CD4-positive, alpha-beta memory T cell (primary cell): ENCODE measurements at regions of chr7 and their contacts with region 1.

Region 1: DNA sequence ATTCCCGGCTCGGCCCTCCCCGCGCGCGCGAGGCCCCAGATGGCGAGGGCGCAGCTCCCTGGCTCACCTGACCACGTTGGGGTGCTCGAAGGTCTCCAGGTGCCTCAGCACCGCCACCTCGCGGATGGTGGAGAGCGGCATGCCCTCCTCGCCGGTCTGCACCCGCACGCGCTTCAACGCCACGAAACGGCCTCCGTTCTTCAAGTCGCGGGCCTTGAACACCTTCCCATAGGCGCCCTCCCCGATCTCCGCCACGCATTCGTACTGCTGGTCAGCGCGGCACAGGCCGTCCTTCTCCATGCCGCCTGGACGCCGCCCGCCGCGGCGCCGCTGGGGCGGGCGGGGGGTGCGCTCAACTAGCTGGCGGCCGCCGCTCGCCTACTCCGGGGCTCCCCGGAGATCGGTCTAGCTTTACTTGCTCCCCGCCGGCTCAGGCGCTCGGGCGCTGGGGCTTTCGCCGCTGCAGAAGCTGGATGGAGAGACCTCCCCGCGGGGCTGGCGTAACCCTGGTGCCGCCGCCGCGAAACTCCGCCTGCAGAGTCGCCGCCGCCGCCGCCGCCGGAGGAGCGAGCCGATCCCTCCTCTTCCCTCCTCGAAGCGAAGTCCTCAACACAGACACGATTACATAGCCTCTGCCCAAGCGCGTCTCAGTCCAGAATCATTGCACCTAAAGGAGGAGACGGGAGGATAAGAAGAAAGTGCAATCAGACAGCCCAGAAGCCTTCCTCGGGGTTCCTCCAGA is 3.2 kb downstream of the CDK6 start:
- DNase-seq: peak; percentile 83 to 89 (median 86)
- H3K4me3 ChIP-seq: peak overlapping the region; percentile 73 to 89
- H3K4me3 Mint-ChIP-seq: peak overlapping the region; percentile 87 to 98 (median 94)
- H3K27ac ChIP-seq: peak overlapping the region; percentile 68
- H3K27ac Mint-ChIP-seq: peak overlapping the region; percentile 93 to 96 (median 94)
- H3K4me1 ChIP-seq: peaks cover 36% of the 10 kb centered on the region
- H3K4me1 Mint-ChIP-seq: peaks cover 30 to 66% (median 43%) of the 10 kb centered on the region in 4 donors
- H3K27me3 ChIP-seq: no peaks in the 10 kb centered on the region
- H3K27me3 Mint-ChIP-seq: no peaks in the 10 kb centered on the region

Region 2: GRCh38 chr7:92245487-92246362 is 587.5 kb before region 1 on chr7 and contains the starts of genes ANKIB1 and KRIT1:
- CTCF ChIA-PET with region 1: no interaction called
- POLR2A ChIA-PET with region 1: no interaction called
- intact Hi-C with region 1: loop called (anchors 10 kb)
- DNase-seq: peak; percentile 86 to 91 (median 88)
- H3K4me3 ChIP-seq: peak within 1 kb of the TSS; percentile 91 to 98
- H3K4me3 Mint-ChIP-seq: peak within 1 kb of the TSS; percentile 94 to 100 (median 99)
- H3K27ac ChIP-seq: peak within 1 kb of the TSS; percentile 97
- H3K27ac Mint-ChIP-seq: peak within 1 kb of the TSS; percentile 98 to 100 (median 100)
- H3K4me1 ChIP-seq: peaks cover 43% of the 10 kb centered on the region
- H3K4me1 Mint-ChIP-seq: peaks cover 26 to 49% (median 37%) of the 10 kb centered on the region in 4 donors
- H3K27me3 ChIP-seq: no peaks in the 10 kb centered on the region
- H3K27me3 Mint-ChIP-seq: no peaks in the 10 kb centered on the region
- total RNA-seq, gene ANKIB1: 77.7 to 78.5 TPM
- total RNA-seq, gene KRIT1: 66.0 to 80.7 TPM

Region 3: DNA sequence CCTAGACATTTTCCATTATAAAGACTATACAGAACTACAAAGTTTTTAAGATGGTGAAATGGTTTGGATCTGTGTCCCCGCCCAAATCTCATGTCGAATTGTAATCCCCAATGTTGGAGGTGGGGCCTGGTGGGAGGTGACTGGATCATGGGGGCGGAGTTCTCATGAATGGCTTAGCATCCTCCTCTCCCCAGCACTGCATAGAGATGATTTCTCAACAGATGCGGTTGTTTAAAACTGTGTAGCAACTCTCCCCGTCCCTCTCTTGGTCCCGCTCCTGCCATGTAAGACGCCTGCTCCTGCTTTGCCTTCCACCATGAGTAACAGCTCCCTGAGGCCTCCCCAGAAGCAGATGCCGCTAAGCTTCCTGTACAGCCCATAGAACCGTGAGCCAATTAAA is 244.6 kb before region 1 on chr7:
- CTCF ChIA-PET with region 1: interaction called, 3 read pairs
- POLR2A ChIA-PET with region 1: interaction called, 5 read pairs
- intact Hi-C with region 1: loop called (anchors 1 kb)
- DNase-seq: peak in 1 of 5 donors; percentile 4
- H3K4me3 ChIP-seq: peak overlapping the region; percentile 82 to 98
- H3K4me3 Mint-ChIP-seq: peak overlapping the region; percentile 87 to 98 (median 96)
- H3K27ac ChIP-seq: peak overlapping the region; percentile 91
- H3K27ac Mint-ChIP-seq: peak overlapping the region; percentile 19 to 97 (median 80)
- H3K4me1 ChIP-seq: peaks cover 58% of the 10 kb centered on the region
- H3K4me1 Mint-ChIP-seq: peaks cover 41 to 72% (median 52%) of the 10 kb centered on the region in 4 donors
- H3K27me3 ChIP-seq: no peaks in the 10 kb centered on the region
- H3K27me3 Mint-ChIP-seq: no peaks in the 10 kb centered on the region

Region 4: DNA sequence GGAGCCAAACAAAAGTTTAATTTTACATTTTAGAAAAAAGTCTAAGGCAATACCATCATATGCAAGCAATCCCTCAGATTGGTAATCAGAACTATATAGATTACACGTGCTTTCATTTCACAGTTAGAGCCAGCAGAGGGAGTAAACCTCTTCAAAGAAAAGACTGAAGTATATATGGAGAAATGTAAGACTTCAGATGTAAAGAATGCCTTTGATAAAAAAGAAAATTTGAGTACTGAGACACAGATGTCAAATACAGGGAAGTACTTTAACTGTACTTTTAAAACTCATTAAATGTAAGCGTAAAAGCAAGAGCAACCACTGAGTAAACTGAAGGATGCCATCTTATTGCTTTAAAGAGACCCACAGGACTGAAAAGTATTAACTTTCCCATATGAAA is 141.6 kb before region 1 on chr7:
- CTCF ChIA-PET with region 1: interaction called, 26 read pairs
- POLR2A ChIA-PET with region 1: interaction called, 10 read pairs
- intact Hi-C with region 1: loop called (anchors 1 kb)
- DNase-seq: peak; percentile 38 to 58 (median 43)
- H3K4me3 ChIP-seq: no peak overlapping the region
- H3K4me3 Mint-ChIP-seq: peak overlapping the region in 2 of 8 donors; percentile 4 to 6
- H3K27ac ChIP-seq: no peak overlapping the region
- H3K27ac Mint-ChIP-seq: peak overlapping the region; percentile 18 to 84 (median 55)
- H3K4me1 ChIP-seq: peaks cover 32% of the 10 kb centered on the region
- H3K4me1 Mint-ChIP-seq: peaks cover 20 to 42% (median 33%) of the 10 kb centered on the region in 4 donors
- H3K27me3 ChIP-seq: no peaks in the 10 kb centered on the region
- H3K27me3 Mint-ChIP-seq: no peaks in the 10 kb centered on the region

Region 5: GRCh38 chr7:92809397-92810241 is 23.6 kb before region 1 on chr7:
- CTCF ChIA-PET with region 1: interaction called, 122 read pairs
- POLR2A ChIA-PET with region 1: interaction called, 82 read pairs
- intact Hi-C with region 1: loop called (anchors 1 kb)
- DNase-seq: peak; percentile 68 to 81 (median 74)
- H3K4me3 ChIP-seq: peak overlapping the region in 1 of 2 donors; percentile 28
- H3K4me3 Mint-ChIP-seq: peak overlapping the region; percentile 66 to 87 (median 80)
- H3K27ac ChIP-seq: peak overlapping the region; percentile 46
- H3K27ac Mint-ChIP-seq: peak overlapping the region; percentile 69 to 96 (median 81)
- H3K4me1 ChIP-seq: peaks cover 37% of the 10 kb centered on the region
- H3K4me1 Mint-ChIP-seq: peaks cover 32 to 53% (median 39%) of the 10 kb centered on the region in 4 donors
- H3K27me3 ChIP-seq: no peaks in the 10 kb centered on the region
- H3K27me3 Mint-ChIP-seq: no peaks in the 10 kb centered on the region

Region 6: GRCh38 chr7:93055543-93056107 is 222.4 kb after region 1 on chr7:
- CTCF ChIA-PET with region 1: interaction called, 3 read pairs
- POLR2A ChIA-PET with region 1: no interaction called
- intact Hi-C with region 1: loop called (anchors 1 kb)
- DNase-seq: peak in 4 of 5 donors; percentile 37 to 48 (median 46)
- H3K4me3 ChIP-seq: no peak overlapping the region
- H3K4me3 Mint-ChIP-seq: no peak overlapping the region
- H3K27ac ChIP-seq: no peak overlapping the region
- H3K27ac Mint-ChIP-seq: no peak overlapping the region
- H3K4me1 ChIP-seq: no peaks in the 10 kb centered on the region
- H3K4me1 Mint-ChIP-seq: peaks cover 0 to 2% (median 0%) of the 10 kb centered on the region in 4 donors
- H3K27me3 ChIP-seq: no peaks in the 10 kb centered on the region
- H3K27me3 Mint-ChIP-seq: peaks cover 0 to 4% of the 10 kb centered on the region in 2 donors

Region 7: DNA sequence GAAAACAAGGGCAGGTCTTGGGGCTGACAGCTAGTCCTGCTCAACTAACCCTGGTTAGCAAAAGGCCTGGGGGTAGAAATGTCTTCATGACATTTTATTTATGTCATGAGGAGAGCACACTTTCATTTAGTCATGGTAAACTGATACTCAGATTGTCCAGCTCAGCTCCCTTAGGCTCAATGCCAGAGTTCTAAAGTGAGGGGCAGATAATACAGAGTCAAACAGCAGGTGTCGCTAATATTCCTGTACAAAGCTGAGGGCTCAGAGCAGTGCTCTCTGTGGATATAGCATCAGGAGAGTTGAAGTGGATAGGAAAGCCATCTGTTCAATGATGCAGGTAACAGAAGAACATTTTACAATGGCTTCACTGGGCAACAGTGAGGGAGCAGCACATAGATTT is 768.2 kb after region 1 on chr7:
- CTCF ChIA-PET with region 1: no interaction called
- POLR2A ChIA-PET with region 1: no interaction called
- intact Hi-C with region 1: no loop called
- DNase-seq: no peak
- H3K4me3 ChIP-seq: no peak overlapping the region
- H3K4me3 Mint-ChIP-seq: no peak overlapping the region
- H3K27ac ChIP-seq: no peak overlapping the region
- H3K27ac Mint-ChIP-seq: no peak overlapping the region
- H3K4me1 ChIP-seq: no peaks in the 10 kb centered on the region
- H3K4me1 Mint-ChIP-seq: no peaks in the 10 kb centered on the region
- H3K27me3 ChIP-seq: no peaks in the 10 kb centered on the region
- H3K27me3 Mint-ChIP-seq: peaks cover 0 to 2% of the 10 kb centered on the region in 2 donors